ENCODE measurements at regions of chr19 and their contacts with region 1.

Region 1: DNA sequence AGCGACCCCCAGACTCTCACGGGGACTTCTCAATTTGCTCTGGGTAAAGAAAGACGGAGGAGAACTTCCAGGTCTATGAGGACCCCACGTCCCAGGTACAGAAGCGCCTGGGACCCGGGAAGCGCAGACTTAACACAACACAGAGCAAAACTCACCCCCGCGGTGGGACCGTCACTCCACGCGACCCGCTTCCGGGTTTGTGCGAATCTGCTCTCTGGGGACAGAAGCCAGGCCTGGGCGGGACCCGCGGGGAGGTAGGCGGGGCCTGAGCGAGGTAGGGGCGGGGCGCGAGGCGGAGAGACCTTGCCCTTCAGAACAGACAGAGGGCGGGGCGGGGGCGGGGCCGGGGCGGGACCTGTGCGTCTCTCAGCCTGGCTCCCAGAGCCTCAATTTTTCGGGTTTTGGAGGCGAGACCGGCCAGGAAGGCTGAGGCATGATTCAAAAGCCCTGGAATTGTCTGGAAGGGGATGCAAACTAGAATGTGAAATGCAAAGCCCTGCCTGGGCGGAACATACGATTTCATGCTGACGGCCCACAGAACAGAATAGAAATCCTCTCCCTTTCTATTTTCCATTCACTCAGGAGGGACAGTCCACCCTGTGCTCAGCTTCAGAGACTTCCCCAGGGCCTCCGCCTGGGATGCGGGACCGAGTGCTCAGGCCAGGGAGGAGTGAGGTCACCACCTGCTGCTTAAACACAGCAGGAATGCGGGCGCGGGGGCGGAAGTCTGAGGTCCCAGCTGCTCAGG is 19.3 kb upstream of the ZNF888 start:
- DNase-seq: peak; percentile 98
- H3K4me3 Mint-ChIP-seq: peak overlapping the region; percentile 76
- H3K27ac Mint-ChIP-seq: peak overlapping the region; percentile 54
- H3K4me1 Mint-ChIP-seq: peaks cover 35% of the 10 kb centered on the region
- H3K27me3 Mint-ChIP-seq: no peaks in the 10 kb centered on the region
- CTCF ChIP-seq: no peak

Region 2: GRCh38 chr19:52734893-52735661 is 207.5 kb before region 1 on chr19 and contains the start of gene ZNF611:
- CTCF ChIA-PET with region 1: no interaction called
- intact Hi-C with region 1: loop called (anchors 10 kb)
- DNase-seq: peak; percentile 97
- H3K4me3 Mint-ChIP-seq: peak within 1 kb of the TSS; percentile 64
- H3K27ac Mint-ChIP-seq: peak within 1 kb of the TSS; percentile 7
- H3K4me1 Mint-ChIP-seq: peaks cover 12% of the 10 kb centered on the region
- H3K27me3 Mint-ChIP-seq: no peaks in the 10 kb centered on the region
- CTCF ChIP-seq: no peak
- total RNA-seq, gene ZNF611: 14.1 and 19.8 TPM in 2 replicates

Region 3: DNA sequence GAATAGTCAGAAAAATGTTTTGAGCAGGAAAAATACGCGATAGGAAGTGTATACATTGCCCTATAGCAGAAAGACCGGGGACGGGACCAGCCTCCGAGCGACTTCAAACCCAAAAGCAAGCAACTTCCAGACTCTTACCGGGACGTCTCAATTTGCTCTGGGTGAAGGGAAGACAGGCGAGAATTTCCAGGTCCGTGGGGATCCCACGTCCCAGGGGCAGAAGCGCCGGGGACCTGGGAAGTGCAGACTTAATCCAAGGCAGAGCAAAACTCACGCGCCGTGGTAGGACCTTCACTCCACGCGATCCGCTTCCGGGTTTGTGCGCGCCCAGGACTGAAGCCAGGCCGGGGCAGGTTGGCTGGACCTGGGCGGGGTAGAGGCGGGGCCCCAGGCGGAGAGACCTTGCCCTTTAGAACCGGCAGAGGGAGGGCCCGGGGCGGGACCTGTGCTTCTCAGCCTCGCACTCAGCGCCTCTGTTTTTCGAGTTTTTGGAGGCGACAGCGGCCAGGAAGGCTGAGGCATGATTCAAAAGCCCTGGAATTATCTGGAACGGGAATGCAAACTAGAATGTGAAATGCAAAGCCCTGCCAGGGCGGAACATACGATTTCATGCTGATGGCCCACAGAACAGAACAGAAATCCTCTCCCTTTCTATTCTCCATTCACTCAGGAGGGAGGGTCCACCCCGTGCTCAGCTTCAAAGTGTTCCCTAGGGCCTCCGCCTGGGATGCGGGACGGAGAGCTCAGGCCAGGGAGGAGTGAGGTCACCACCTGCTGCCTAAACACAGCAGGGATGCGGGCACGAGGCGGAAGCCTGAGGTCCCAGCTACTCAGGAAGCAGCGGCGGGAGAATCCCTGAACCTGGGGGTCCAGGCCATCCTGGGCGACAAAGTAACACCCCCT is 155.9 kb before region 1 on chr19 and contains the start of gene ZNF600:
- CTCF ChIA-PET with region 1: no interaction called
- intact Hi-C with region 1: loop called (anchors 5 kb)
- DNase-seq: peak; percentile 86
- H3K4me3 Mint-ChIP-seq: peak within 1 kb of the TSS; percentile 70
- H3K27ac Mint-ChIP-seq: peak within 1 kb of the TSS; percentile 29
- H3K4me1 Mint-ChIP-seq: peaks cover 12% of the 10 kb centered on the region
- H3K27me3 Mint-ChIP-seq: no peaks in the 10 kb centered on the region
- CTCF ChIP-seq: peak; percentile 30
- total RNA-seq, gene ZNF600: 18.4 and 23.4 TPM in 2 replicates

Region 4: DNA sequence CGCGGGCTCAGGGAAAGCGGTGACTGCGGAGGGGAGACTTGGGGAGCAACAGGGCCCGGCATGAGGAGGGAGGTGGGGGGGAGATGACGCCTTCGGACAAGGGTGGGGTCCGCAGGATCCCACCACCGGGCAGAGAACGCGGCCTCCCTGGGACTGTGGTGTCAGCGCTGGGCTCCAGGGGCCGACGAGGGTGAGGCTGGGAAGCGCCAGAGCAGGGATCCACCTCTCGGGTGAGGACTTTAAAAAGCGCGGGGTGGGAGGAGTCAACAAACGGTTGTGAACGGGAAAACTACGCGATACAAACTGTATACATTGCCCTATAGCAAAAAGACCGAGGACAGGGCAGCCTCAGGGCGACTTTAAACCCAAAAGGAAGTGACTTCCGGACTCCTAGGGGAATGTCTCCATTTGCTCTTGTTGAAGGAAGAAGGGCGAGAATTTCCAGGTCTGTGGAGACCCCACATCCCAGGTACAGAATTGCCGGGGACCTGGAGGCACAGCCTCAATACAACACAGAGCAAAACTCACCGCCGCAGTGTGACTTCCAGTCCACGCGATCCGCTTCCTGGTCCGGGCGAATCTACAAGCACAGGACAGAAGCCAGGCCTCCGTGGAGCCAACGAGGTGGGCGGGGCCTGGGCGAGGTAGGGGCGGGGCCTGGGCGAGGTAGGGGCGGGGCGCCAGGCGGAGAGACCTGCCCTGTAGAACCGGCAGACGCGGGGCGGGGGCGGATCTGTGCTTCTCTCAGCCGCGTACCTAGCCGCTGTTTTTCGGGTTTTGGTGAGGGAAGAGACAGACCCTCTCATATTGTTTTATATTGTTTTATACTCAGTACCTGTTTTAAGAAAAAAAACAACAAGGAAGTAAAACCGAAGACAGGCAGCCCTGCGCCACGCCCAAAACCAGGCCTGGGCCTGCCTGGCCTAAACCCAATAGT is 19.5 kb before region 1 on chr19 and contains the start of gene ZNF888:
- CTCF ChIA-PET with region 1: no interaction called
- intact Hi-C with region 1: loop called (anchors 2 kb)
- DNase-seq: peak; percentile 95
- H3K4me3 Mint-ChIP-seq: peak within 1 kb of the TSS; percentile 79
- H3K27ac Mint-ChIP-seq: peak within 1 kb of the TSS; percentile 80
- H3K4me1 Mint-ChIP-seq: peaks cover 42% of the 10 kb centered on the region
- H3K27me3 Mint-ChIP-seq: no peaks in the 10 kb centered on the region
- CTCF ChIP-seq: no peak
- total RNA-seq, gene ZNF888: 25.5 and 27.0 TPM in 2 replicates

Region 5: GRCh38 chr19:53195265-53195903 is 252.8 kb after region 1 on chr19:
- CTCF ChIA-PET with region 1: no interaction called
- intact Hi-C with region 1: loop called (anchors 10 kb)
- DNase-seq: peak; percentile 63
- H3K4me3 Mint-ChIP-seq: no peak overlapping the region
- H3K27ac Mint-ChIP-seq: no peak overlapping the region
- H3K4me1 Mint-ChIP-seq: no peaks in the 10 kb centered on the region
- H3K27me3 Mint-ChIP-seq: no peaks in the 10 kb centered on the region
- CTCF ChIP-seq: peak; percentile 75

Measured in Calu3 (cell line).